HEK293 (cell line): ENCODE measurements at regions of chr18 and their contacts with region 1.

Region 1: GRCh38 chr18:45621061-45621511 is 5.8 kb downstream of the SLC14A2 start:
- H3K4me3 ChIP-seq: no peak overlapping the region
- H3K27ac ChIP-seq: no peak overlapping the region
- H3K4me1 ChIP-seq: peaks cover 4% of the 10 kb centered on the region
- CTCF ChIP-seq: peak; percentile 77

Region 2: GRCh38 chr18:45608400-45608799 is 12.7 kb before region 1 on chr18:
- CTCF ChIA-PET with region 1: interaction called, 22 read pairs
- POLR2A ChIA-PET with region 1: no interaction called
- H3K4me3 ChIP-seq: no peak overlapping the region
- H3K27ac ChIP-seq: no peak overlapping the region
- H3K4me1 ChIP-seq: no peaks in the 10 kb centered on the region
- CTCF ChIP-seq: no peak

Region 3: GRCh38 chr18:45635931-45636509 is 14.9 kb after region 1 on chr18:
- CTCF ChIA-PET with region 1: interaction called, 22 read pairs
- POLR2A ChIA-PET with region 1: interaction called, 3 read pairs
- H3K4me3 ChIP-seq: no peak overlapping the region
- H3K27ac ChIP-seq: no peak overlapping the region
- H3K4me1 ChIP-seq: no peaks in the 10 kb centered on the region
- CTCF ChIP-seq: no peak

Region 4: GRCh38 chr18:45738658-45739057 is 117.6 kb after region 1 on chr18:
- CTCF ChIA-PET with region 1: no interaction called
- POLR2A ChIA-PET with region 1: no interaction called
- H3K4me3 ChIP-seq: no peak overlapping the region
- H3K27ac ChIP-seq: no peak overlapping the region
- H3K4me1 ChIP-seq: no peaks in the 10 kb centered on the region
- CTCF ChIP-seq: no peak